ENCODE measurements at regions of chr12 and their contacts with region 1.

Region 1: DNA sequence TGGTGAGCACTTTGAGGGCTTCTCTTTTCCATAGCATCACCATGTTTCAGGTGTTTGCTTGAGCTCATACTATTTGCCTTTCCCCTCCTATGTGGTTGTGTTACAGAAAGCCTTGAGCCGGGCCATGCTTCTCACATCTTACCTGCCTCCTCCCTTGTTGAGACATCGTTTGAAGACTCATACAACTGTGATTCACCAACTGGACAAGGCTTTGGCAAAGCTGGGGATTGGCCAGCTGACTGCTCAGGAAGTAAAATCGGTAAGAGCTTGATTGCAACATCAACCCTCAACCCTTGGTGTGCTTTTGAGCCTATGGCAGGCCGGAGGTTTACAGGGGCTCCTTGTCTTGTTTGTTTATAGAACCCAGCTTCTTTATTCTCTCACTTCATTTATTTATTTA is 8.1 kb downstream of the LETMD1 start:
- DNase-seq: no peak
- ATAC-seq: no peak
- H3K4me3 Mint-ChIP-seq: no peak overlapping the region
- H3K27ac Mint-ChIP-seq: no peak overlapping the region
- H3K4me1 Mint-ChIP-seq: no peaks in the 10 kb centered on the region
- H3K27me3 Mint-ChIP-seq: no peaks in the 10 kb centered on the region
- CTCF ChIP-seq: no peak

Region 2: DNA sequence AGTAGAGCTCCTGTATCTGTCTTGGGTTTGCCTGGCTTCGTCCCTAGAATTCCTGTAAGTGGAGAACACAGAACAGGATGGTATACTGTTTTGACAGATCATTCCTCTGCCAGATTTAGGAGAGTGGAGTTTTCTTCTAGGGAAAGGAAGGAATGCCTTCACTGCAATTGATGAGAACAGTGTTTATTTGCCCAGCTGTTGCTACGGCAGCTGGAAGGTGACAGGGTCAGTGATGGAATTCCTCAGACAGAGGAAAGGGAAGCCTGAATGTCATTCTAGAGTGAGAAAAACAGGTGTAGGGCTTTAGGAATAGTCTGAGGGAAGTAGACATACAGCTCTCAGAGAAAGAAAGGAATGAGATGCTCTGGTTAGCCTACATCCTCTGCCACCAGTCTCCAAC is 15.4 kb after region 1 on chr12:
- CTCF ChIA-PET with region 1: no interaction called
- POLR2A ChIA-PET with region 1: interaction called, 10 read pairs
- intact Hi-C with region 1: no loop called
- DNase-seq: no peak
- ATAC-seq: no peak
- H3K4me3 Mint-ChIP-seq: no peak overlapping the region
- H3K27ac Mint-ChIP-seq: no peak overlapping the region
- H3K4me1 Mint-ChIP-seq: no peaks in the 10 kb centered on the region
- H3K27me3 Mint-ChIP-seq: no peaks in the 10 kb centered on the region
- CTCF ChIP-seq: no peak